Caco-2 (cell line): ENCODE measurements at regions of chr4 and their contacts with region 1.

Region 1: DNA sequence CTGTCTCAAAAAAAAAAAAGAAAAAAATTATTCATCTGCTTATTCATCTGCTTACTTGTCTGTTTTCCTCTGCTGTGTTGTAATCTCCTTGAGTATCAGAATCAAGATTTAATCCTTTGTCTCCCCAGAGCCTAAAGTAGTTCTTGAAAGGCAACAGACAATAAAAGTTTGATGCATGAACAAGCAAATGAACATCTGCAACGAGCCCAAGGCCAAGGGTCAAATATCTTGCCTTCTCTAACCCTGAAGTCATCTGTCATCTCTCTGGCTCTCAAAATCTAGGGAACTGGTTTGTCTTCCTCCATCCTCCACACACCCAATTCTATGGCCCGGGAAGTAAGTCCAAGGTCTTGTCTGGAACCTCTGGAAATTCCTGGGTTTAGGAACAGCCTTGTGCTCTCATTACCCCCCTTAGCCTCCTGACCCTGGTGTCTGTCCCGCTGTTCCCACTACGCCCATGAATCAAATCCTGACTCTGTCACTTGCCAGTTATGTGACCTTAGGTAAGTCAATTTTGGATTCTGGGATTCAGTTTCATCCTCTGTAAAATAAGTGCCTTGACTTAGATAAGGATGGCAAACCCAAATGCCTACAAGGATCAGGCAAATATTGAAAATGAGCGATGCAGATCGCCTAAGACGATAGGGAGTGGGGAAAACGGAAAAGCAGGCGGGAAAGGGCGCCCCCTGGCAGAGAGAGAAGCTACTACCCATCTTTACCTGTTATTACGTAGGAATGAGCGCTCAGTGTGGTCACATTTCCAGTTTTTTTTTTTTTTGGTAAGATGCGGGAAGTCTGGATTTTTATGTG is 102.7 kb upstream of the DHX15 start:
- DNase-seq: peak; percentile 47 to 67
- H3K4me3 ChIP-seq: no peak overlapping the region
- H3K4me3 Mint-ChIP-seq: no peak overlapping the region
- H3K27ac Mint-ChIP-seq: no peak overlapping the region
- H3K4me1 ChIP-seq: peaks cover 6% of the 10 kb centered on the region
- H3K4me1 Mint-ChIP-seq: peaks cover 27% of the 10 kb centered on the region
- H3K27me3 ChIP-seq: no peaks in the 10 kb centered on the region
- H3K27me3 Mint-ChIP-seq: no peaks in the 10 kb centered on the region
- CTCF ChIP-seq: peak; percentile 44 to 74

Region 2: DNA sequence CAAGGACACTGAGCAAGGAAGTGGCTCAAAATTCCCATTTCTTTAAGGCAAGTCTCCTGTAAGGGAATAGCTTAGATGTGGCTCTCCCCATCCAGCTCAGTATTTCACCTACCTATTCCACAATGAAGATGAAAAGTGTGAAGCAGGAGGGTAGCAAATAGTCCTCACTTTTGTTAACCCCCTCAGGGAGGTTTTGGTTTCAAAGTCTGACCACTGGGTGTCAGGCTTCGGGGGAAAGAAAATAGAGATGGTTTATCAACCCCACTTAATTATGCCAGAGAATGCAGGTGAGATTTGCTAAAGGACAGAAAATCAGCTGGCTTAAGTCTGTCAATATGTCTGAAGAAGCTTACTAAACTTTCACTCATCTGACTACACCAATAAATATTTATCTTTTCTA is 172.3 kb before region 1 on chr4:
- CTCF ChIA-PET with region 1: interaction called, 3 read pairs
- POLR2A ChIA-PET with region 1: no interaction called
- intact Hi-C with region 1: loop called (anchors 1 kb)
- DNase-seq: peak in 1 of 2 experiments; percentile 15
- H3K4me3 ChIP-seq: no peak overlapping the region
- H3K4me3 Mint-ChIP-seq: no peak overlapping the region
- H3K27ac Mint-ChIP-seq: no peak overlapping the region
- H3K4me1 ChIP-seq: peaks cover 7% of the 10 kb centered on the region; the same call in 1 of the 2 replicates
- H3K4me1 Mint-ChIP-seq: no peaks in the 10 kb centered on the region
- H3K27me3 ChIP-seq: no peaks in the 10 kb centered on the region
- H3K27me3 Mint-ChIP-seq: no peaks in the 10 kb centered on the region
- CTCF ChIP-seq: no peak